GM12878 (cell line): ENCODE measurements at regions of chr12 and their contacts with region 1.

Region 1: DNA sequence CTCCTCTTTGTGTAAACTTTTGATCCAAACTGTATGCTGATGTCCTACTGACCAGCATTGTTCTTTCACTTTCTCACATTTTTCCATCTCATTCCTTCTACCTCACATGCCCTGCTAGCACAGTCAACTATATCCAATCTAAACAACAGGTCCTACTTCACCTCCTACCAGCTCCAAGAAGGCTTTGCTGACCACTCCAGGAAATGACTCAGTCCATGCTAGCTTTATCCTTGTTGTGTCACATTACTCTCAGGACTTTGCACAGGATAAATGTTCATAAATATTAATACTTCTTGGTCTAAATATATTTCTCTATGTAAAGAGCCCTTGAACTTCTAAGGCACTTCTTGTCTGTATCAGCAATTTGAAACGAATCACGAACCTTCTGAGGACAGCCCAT is 64.9 kb upstream of the PCED1B start:
- DNase-seq: no peak
- ATAC-seq: no peak
- H3K4me3 ChIP-seq: no peak overlapping the region
- H3K27ac ChIP-seq: no peak overlapping the region
- H3K4me1 ChIP-seq: no peaks in the 10 kb centered on the region
- H3K27me3 ChIP-seq: no peaks in the 10 kb centered on the region
- CTCF ChIP-seq: no peak
- EP300 ChIP-seq: no peak
- POLR2A ChIP-seq: no peak
- RAD21 ChIP-seq: no peak

Region 2: GRCh38 chr12:46332260-46332659 is 682.2 kb before region 1 on chr12:
- CTCF ChIA-PET with region 1: no interaction called
- POLR2A ChIA-PET with region 1: no interaction called
- RAD21 ChIA-PET with region 1: no interaction called
- SMC1A ChIA-PET with region 1: no interaction called
- in situ Hi-C with region 1: loop called (anchors 10 kb)
- intact Hi-C with region 1: no loop called
- DNase-seq: no peak
- ATAC-seq: no peak
- H3K4me3 ChIP-seq: no peak overlapping the region
- H3K27ac ChIP-seq: no peak overlapping the region
- H3K4me1 ChIP-seq: no peaks in the 10 kb centered on the region
- H3K27me3 ChIP-seq: no peaks in the 10 kb centered on the region
- CTCF ChIP-seq: no peak
- EP300 ChIP-seq: no peak
- POLR2A ChIP-seq: no peak
- RAD21 ChIP-seq: no peak

Region 3: DNA sequence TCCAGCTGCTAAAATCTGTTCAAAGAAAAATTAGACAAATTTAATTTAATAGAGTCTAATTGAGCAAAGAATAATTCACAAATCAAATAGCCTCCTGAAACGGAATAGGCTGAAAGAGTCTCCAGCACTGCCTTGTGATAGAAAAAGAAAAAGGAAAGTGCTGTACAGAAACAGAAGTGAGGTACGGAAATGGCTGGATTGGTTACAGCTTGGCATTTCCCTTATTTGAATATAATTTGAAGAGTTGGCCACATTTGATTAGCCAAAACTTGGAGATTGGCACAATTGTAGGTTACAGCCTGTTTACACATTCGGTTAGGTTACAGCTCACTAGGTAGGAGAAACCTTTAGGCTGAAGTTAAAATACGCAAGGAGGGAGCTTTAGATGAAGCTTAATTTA is 40.2 kb after region 1 on chr12:
- CTCF ChIA-PET with region 1: no interaction called
- POLR2A ChIA-PET with region 1: no interaction called
- RAD21 ChIA-PET with region 1: no interaction called
- SMC1A ChIA-PET with region 1: no interaction called
- in situ Hi-C with region 1: no loop called
- intact Hi-C with region 1: no loop called
- DNase-seq: no peak
- ATAC-seq: no peak
- H3K4me3 ChIP-seq: no peak overlapping the region
- H3K27ac ChIP-seq: no peak overlapping the region
- H3K4me1 ChIP-seq: no peaks in the 10 kb centered on the region
- H3K27me3 ChIP-seq: peaks cover 0 to 2% of the 10 kb centered on the region in 2 experiments; a peak in 1 of 4 replicates
- CTCF ChIP-seq: no peak
- EP300 ChIP-seq: no peak
- POLR2A ChIP-seq: no peak
- RAD21 ChIP-seq: no peak

Region 4: DNA sequence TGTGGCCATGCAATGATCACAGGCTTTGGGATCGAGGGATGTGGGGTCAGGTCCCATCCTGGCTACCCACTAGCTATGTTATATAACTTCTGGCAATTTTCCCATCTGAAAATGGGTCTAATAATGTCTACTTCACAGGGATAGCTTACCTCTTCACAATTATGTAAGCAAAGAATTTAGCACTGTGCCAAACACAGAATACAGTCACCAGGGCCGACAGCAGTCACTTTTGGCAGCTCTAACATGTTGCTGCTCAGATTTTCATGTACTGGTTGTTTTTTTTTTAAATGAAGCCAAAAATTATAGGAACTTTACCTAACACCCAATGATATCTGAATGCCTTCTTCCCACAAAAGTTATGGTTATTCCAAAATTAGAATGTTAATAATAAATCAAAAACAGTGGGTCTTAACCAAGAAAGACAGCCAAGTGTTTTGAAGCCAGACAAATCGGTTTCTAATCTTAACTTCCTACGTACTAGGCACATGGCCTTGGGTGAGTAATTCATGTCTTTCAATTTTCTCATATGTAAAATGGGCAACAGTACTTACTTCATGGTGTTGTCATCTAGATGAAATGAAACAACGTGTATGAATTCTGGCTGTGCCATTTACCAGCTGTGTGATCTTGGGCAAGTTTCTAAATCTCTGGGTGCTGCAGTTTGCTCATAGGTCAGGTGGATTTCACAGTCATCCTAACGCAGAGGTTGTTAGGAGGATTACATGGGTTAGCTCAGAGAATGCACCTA is 52.0 kb after region 1 on chr12:
- CTCF ChIA-PET with region 1: no interaction called
- POLR2A ChIA-PET with region 1: no interaction called
- RAD21 ChIA-PET with region 1: no interaction called
- SMC1A ChIA-PET with region 1: no interaction called
- in situ Hi-C with region 1: no loop called
- intact Hi-C with region 1: no loop called
- DNase-seq: no peak
- ATAC-seq: peak; percentile 88
- H3K4me3 ChIP-seq: no peak overlapping the region
- H3K27ac ChIP-seq: no peak overlapping the region
- H3K4me1 ChIP-seq: no peaks in the 10 kb centered on the region
- H3K27me3 ChIP-seq: no peaks in the 10 kb centered on the region
- CTCF ChIP-seq: no peak
- EP300 ChIP-seq: no peak
- POLR2A ChIP-seq: no peak
- RAD21 ChIP-seq: no peak